B cell (primary cell): ENCODE measurements at regions of chr15 and their contacts with region 1.

Region 1: GRCh38 chr15:88620995-88621772 is at the start of gene AEN:
- DNase-seq: peak; percentile 96
- ATAC-seq: peak; percentile 97
- H3K4me3 ChIP-seq: peak within 1 kb of the TSS; percentile 56 to 88 (median 80)
- H3K4me3 Mint-ChIP-seq: peak within 1 kb of the TSS; percentile 85
- H3K27ac ChIP-seq: peak within 1 kb of the TSS; percentile 72 to 86
- H3K27ac Mint-ChIP-seq: peak within 1 kb of the TSS; percentile 94
- H3K4me1 ChIP-seq: peaks cover 36 to 50% of the 10 kb centered on the region in 2 donors
- H3K4me1 Mint-ChIP-seq: peaks cover 47% of the 10 kb centered on the region
- H3K27me3 ChIP-seq: peaks cover 0 to 3% (median 0%) of the 10 kb centered on the region in 4 experiments
- H3K27me3 Mint-ChIP-seq: peaks cover 4% of the 10 kb centered on the region
- CTCF ChIP-seq: no peak
- total RNA-seq, gene AEN: 18.5 and 24.0 TPM in 2 replicates

Region 2: DNA sequence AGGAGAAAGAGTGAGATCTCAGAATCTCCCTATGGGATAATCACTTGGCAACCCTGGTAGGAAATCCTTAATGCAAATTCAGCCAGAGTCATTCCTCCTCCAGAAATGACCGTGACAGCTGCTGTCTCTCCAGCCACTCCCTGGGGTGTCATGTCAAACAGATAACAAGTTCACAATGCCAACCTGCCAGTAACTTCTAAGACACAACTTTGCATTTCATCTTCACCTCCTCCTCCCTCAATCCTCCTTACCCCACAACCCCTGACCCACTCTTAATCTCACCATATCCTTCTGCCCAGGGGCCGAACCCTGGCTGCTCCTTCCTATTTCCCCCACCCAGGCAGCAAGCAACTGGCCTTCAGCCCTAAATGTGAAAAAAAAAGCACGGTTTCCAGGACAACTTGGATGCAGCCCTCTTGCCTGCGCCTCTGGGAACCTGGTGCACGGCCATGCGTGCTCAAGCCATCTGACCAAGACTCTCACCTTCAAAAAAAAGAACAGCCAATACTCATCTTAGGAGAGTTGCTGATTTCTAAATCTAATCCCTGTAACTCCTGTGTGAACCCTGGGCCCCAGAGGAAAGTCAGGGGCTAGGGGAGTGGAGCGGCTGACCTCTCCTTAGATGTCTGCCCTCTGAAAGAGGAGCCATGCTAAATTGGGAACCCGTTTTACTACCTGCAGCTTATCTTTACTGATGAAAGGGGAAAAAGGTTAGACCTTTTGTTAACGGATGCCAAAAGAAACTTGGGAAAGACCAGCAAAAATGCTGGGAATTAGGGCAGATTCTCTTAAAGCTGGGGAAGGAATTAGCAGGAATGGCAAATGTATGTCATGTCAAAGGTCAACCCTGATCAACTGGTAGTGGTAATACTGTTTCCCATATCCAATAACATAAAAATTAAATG is 530.5 kb before region 1 on chr15:
- CTCF ChIA-PET with region 1: no interaction called
- POLR2A ChIA-PET with region 1: no interaction called
- intact Hi-C with region 1: no loop called
- DNase-seq: no peak
- ATAC-seq: no peak
- H3K4me3 ChIP-seq: no peak overlapping the region
- H3K4me3 Mint-ChIP-seq: no peak overlapping the region
- H3K27ac ChIP-seq: no peak overlapping the region
- H3K27ac Mint-ChIP-seq: no peak overlapping the region
- H3K4me1 ChIP-seq: no peaks in the 10 kb centered on the region
- H3K4me1 Mint-ChIP-seq: no peaks in the 10 kb centered on the region
- H3K27me3 ChIP-seq: no peaks in the 10 kb centered on the region
- H3K27me3 Mint-ChIP-seq: no peaks in the 10 kb centered on the region
- CTCF ChIP-seq: no peak

Region 3: DNA sequence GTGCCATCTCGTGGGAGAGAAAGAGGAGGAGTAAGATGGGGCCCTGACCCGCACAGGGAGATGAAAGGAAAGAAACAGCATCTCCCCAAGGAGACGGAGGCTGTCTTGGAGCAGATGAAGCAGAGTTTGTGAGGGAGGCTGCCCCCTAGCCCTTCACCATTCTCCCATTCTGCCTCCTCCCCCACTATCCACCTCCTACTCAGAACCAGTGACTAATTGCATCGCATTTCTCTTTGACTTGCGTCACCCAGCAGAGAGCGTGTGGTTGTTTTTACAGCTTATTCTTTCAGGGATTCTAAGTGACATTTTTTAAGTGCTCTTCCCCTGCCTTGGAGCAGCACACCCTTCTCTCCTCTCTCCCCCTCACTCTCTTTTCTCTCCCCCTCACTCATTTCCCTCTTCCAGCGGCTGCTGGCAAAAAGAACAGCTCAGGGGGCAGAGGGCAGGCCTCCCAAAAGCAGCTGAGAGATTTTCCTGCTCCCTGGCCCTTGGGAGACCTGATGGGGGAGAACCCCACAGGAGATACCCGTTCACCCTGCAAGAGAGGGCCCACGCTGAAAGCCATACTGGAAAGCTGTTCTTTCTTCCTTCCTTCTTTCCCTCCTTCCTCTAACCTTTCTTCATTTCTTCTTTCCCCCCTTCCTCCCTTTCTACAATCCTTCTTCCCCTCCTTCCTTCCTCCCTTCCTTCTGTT is 245.8 kb before region 1 on chr15:
- CTCF ChIA-PET with region 1: no interaction called
- POLR2A ChIA-PET with region 1: no interaction called
- intact Hi-C with region 1: no loop called
- DNase-seq: no peak
- ATAC-seq: no peak
- H3K4me3 ChIP-seq: no peak overlapping the region
- H3K4me3 Mint-ChIP-seq: no peak overlapping the region
- H3K27ac ChIP-seq: no peak overlapping the region
- H3K27ac Mint-ChIP-seq: no peak overlapping the region
- H3K4me1 ChIP-seq: no peaks in the 10 kb centered on the region
- H3K4me1 Mint-ChIP-seq: no peaks in the 10 kb centered on the region
- H3K27me3 ChIP-seq: peaks cover 0 to 11% (median 0%) of the 10 kb centered on the region in 4 experiments
- H3K27me3 Mint-ChIP-seq: peaks cover 32% of the 10 kb centered on the region
- CTCF ChIP-seq: no peak

Region 4: GRCh38 chr15:88590759-88591158 is 30.4 kb before region 1 on chr15:
- CTCF ChIA-PET with region 1: no interaction called
- POLR2A ChIA-PET with region 1: no interaction called
- intact Hi-C with region 1: no loop called
- DNase-seq: no peak
- ATAC-seq: no peak
- H3K4me3 ChIP-seq: no peak overlapping the region
- H3K4me3 Mint-ChIP-seq: no peak overlapping the region
- H3K27ac ChIP-seq: no peak overlapping the region
- H3K27ac Mint-ChIP-seq: no peak overlapping the region
- H3K4me1 ChIP-seq: no peaks in the 10 kb centered on the region
- H3K4me1 Mint-ChIP-seq: no peaks in the 10 kb centered on the region
- H3K27me3 ChIP-seq: no peaks in the 10 kb centered on the region
- H3K27me3 Mint-ChIP-seq: no peaks in the 10 kb centered on the region
- CTCF ChIP-seq: no peak

Region 5: DNA sequence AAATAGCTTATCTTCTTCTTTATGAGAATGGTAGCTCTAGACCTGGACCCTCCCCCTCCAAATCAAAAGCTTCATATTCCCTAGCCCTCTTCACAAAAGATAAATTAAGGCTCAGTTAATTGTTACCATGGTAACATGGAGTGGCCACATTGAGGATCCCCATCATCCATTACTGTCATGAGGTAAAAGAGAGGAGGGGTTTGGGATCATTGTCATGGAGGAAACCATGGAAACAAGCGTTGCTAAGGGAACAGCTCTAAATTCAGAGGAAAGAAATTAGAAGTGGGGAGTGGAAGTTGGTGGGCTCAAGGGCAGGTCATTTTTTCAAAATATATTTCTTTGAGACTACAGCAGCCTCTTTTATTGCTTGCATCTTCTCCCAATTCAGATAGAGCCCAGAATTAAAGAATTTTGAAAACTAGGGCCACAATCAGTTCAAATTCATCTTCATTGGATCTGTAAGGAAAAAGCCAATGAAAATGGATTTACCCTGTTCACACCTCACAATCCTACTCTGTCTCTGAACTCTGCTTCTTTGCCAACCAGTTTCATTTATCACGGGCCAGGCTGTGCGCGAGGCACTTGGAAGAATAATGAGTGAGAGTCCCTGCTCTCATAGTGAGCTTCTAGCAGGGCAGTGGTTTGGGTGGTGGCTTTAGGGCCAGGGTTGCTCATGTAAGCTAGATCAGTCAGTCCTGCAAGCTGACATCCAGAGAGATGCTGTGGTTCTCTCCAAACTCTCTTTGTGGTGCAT is 11.7 kb before region 1 on chr15:
- CTCF ChIA-PET with region 1: interaction called, 13 read pairs
- POLR2A ChIA-PET with region 1: no interaction called
- intact Hi-C with region 1: no loop called
- DNase-seq: no peak
- ATAC-seq: no peak
- H3K4me3 ChIP-seq: no peak overlapping the region
- H3K4me3 Mint-ChIP-seq: no peak overlapping the region
- H3K27ac ChIP-seq: no peak overlapping the region
- H3K27ac Mint-ChIP-seq: no peak overlapping the region
- H3K4me1 ChIP-seq: peaks cover 11 to 16% of the 10 kb centered on the region in 2 donors
- H3K4me1 Mint-ChIP-seq: peaks cover 7% of the 10 kb centered on the region
- H3K27me3 ChIP-seq: peaks cover 0 to 59% (median 38%) of the 10 kb centered on the region in 4 experiments
- H3K27me3 Mint-ChIP-seq: peaks cover 69% of the 10 kb centered on the region
- CTCF ChIP-seq: no peak

Region 6: DNA sequence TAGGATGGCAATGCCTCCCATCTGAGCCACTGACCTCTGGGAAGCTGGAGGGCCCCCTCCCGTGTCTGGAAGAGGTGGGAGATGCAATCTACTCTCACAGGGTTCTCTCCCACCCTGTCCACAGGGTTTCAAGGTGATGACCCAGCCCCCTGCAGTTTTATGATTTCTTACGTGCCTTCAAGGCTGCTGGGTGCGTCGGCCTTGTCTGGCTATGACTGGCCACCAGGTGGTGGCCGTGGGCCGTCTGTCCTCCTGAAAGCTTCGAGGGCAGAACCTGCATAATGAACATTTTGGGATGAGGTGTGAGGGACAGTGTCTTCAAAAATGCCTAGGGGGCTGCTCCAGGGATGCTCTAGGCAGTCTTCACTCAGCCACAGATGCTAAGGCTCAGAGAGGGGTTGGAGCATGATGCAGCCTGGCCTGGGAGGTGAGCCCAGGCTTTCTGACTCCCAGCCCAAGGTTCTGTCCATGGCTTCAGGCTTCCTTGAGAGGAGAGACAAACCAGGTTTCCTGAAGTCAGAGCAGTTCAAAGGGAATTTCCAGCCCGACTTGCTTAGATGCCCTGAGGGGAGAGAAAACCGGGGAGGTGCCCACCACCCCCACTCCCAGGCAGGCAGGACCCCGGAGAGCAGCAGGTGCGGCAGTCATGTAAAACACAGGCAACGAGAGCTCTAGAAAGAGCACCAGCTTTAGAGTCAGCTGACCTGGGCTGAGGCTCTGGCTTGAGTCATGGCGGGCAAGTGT is 36.3 kb after region 1 on chr15:
- CTCF ChIA-PET with region 1: interaction called, 120 read pairs
- POLR2A ChIA-PET with region 1: interaction called, 9 read pairs
- intact Hi-C with region 1: no loop called
- DNase-seq: peak; percentile 47
- ATAC-seq: no peak
- H3K4me3 ChIP-seq: no peak overlapping the region
- H3K4me3 Mint-ChIP-seq: peak overlapping the region; percentile 82
- H3K27ac ChIP-seq: peak overlapping the region; percentile 80 to 85
- H3K27ac Mint-ChIP-seq: peak overlapping the region; percentile 98
- H3K4me1 ChIP-seq: peaks cover 58 to 69% of the 10 kb centered on the region in 2 donors
- H3K4me1 Mint-ChIP-seq: peaks cover 69% of the 10 kb centered on the region
- H3K27me3 ChIP-seq: no peaks in the 10 kb centered on the region
- H3K27me3 Mint-ChIP-seq: no peaks in the 10 kb centered on the region
- CTCF ChIP-seq: no peak

Region 7: GRCh38 chr15:88805031-88805782 is 184.0 kb after region 1 on chr15:
- CTCF ChIA-PET with region 1: interaction called, 12 read pairs
- POLR2A ChIA-PET with region 1: no interaction called
- intact Hi-C with region 1: loop called (anchors 1 kb)
- DNase-seq: peak; percentile 24
- ATAC-seq: no peak
- H3K4me3 ChIP-seq: no peak overlapping the region
- H3K4me3 Mint-ChIP-seq: no peak overlapping the region
- H3K27ac ChIP-seq: no peak overlapping the region
- H3K27ac Mint-ChIP-seq: no peak overlapping the region
- H3K4me1 ChIP-seq: peaks cover 10 to 20% of the 10 kb centered on the region in 2 donors
- H3K4me1 Mint-ChIP-seq: peaks cover 15% of the 10 kb centered on the region
- H3K27me3 ChIP-seq: peaks cover 0 to 60% (median 23%) of the 10 kb centered on the region in 4 experiments
- H3K27me3 Mint-ChIP-seq: peaks cover 57% of the 10 kb centered on the region
- CTCF ChIP-seq: no peak

Region 8: GRCh38 chr15:88918738-88919137 is 297.6 kb after region 1 on chr15:
- CTCF ChIA-PET with region 1: no interaction called
- POLR2A ChIA-PET with region 1: no interaction called
- intact Hi-C with region 1: no loop called
- DNase-seq: no peak
- ATAC-seq: no peak
- H3K4me3 ChIP-seq: no peak overlapping the region
- H3K4me3 Mint-ChIP-seq: no peak overlapping the region
- H3K27ac ChIP-seq: no peak overlapping the region
- H3K27ac Mint-ChIP-seq: no peak overlapping the region
- H3K4me1 ChIP-seq: peaks cover 0 to 3% of the 10 kb centered on the region in 2 donors
- H3K4me1 Mint-ChIP-seq: peaks cover under 1% of the 10 kb centered on the region
- H3K27me3 ChIP-seq: peaks cover 0 to 7% (median 0%) of the 10 kb centered on the region in 4 experiments
- H3K27me3 Mint-ChIP-seq: peaks cover 45% of the 10 kb centered on the region
- CTCF ChIP-seq: no peak

Region 9: GRCh38 chr15:89057504-89058133 is 436.4 kb after region 1 on chr15:
- CTCF ChIA-PET with region 1: interaction called, 13 read pairs
- POLR2A ChIA-PET with region 1: no interaction called
- intact Hi-C with region 1: no loop called
- DNase-seq: peak; percentile 74
- ATAC-seq: peak; percentile 91
- H3K4me3 ChIP-seq: no peak overlapping the region
- H3K4me3 Mint-ChIP-seq: no peak overlapping the region
- H3K27ac ChIP-seq: no peak overlapping the region
- H3K27ac Mint-ChIP-seq: no peak overlapping the region
- H3K4me1 ChIP-seq: no peaks in the 10 kb centered on the region
- H3K4me1 Mint-ChIP-seq: no peaks in the 10 kb centered on the region
- H3K27me3 ChIP-seq: peaks cover 0 to 8% (median 0%) of the 10 kb centered on the region in 4 experiments
- H3K27me3 Mint-ChIP-seq: peaks cover 14% of the 10 kb centered on the region
- CTCF ChIP-seq: peak; percentile 95

Region 10: DNA sequence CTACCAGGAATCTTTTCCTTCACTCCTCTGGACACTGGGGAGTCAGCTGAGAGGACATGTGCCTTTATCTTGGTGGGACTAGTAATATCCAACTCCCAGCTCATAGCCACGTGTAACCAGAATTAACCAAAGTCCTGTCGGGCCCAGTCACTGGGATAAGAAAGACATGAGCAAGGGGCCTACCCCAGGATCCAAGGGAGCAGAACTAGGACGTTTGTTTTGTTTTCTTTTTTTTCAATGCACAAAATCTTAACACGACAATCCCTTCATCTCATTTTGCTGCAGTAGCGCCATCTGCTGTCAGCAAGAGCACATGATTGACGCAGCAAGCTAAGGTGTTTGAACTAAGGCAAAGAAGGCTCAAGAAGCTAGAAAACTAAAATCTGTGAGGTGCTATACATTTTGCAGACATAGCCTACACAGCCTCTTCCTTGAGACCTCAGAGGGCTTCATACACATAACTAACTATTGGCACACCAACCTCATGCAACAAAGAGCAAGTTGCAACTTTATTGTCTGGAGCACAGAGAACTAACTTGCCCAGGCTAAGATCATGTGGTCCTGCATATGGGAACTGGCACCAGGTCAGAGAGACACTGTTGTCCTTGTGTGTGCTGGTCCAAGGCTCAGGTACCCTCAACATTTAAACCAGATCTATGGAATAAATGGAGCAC is 556.6 kb after region 1 on chr15:
- CTCF ChIA-PET with region 1: interaction called, 6 read pairs
- POLR2A ChIA-PET with region 1: no interaction called
- intact Hi-C with region 1: loop called (anchors 10 kb)
- DNase-seq: peak; percentile 64
- ATAC-seq: no peak
- H3K4me3 ChIP-seq: no peak overlapping the region
- H3K4me3 Mint-ChIP-seq: no peak overlapping the region
- H3K27ac ChIP-seq: no peak overlapping the region
- H3K27ac Mint-ChIP-seq: no peak overlapping the region
- H3K4me1 ChIP-seq: no peaks in the 10 kb centered on the region
- H3K4me1 Mint-ChIP-seq: no peaks in the 10 kb centered on the region
- H3K27me3 ChIP-seq: no peaks in the 10 kb centered on the region
- H3K27me3 Mint-ChIP-seq: no peaks in the 10 kb centered on the region
- CTCF ChIP-seq: peak; percentile 78